Calu3 (cell line): ENCODE measurements at regions of chr1 and their contacts with region 1.

Region 1: DNA sequence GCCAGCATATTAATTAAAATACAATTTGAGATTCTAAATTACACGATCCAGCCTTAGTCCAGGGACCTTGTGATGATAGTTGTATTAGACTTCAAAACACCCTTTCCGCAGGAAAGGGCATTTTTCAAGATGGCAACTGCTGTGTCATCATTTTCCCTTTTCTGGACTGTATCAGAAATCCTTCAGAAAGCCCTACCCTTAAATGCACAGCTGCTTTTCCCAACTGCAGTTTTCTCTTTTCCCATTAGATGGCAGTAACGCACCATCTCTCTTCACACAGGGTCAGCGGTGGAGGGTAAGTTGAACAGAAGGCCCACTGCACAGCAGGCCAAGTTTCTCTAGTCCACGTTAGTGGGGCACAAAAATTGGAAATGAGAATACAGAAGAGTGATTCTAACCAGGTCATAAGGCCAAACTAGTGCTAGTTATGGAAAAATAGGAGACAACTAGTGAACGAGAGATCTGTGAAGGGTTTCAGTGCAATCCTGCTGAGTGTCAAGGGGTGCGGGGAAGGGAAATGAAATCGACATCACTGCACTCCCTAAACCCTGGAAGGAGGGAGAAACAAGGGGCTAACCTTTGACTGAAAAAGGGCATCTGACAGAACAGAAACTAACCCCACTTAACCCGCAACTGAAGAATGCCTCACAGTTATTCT is 22.1 kb upstream of the TDRD10 start:
- DNase-seq: peak; percentile 88
- H3K4me3 Mint-ChIP-seq: no peak overlapping the region
- H3K27ac Mint-ChIP-seq: no peak overlapping the region
- H3K4me1 Mint-ChIP-seq: peaks cover 30% of the 10 kb centered on the region
- H3K27me3 Mint-ChIP-seq: peaks cover 12% of the 10 kb centered on the region
- CTCF ChIP-seq: peak; percentile 82

Region 2: GRCh38 chr1:154352581-154353459 is 127.1 kb before region 1 on chr1:
- CTCF ChIA-PET with region 1: interaction called, 8 read pairs
- intact Hi-C with region 1: loop called (anchors 1 kb)
- DNase-seq: peak; percentile 49
- H3K4me3 Mint-ChIP-seq: peak overlapping the region; percentile 63
- H3K27ac Mint-ChIP-seq: peak overlapping the region; percentile 32
- H3K4me1 Mint-ChIP-seq: peaks cover 32% of the 10 kb centered on the region
- H3K27me3 Mint-ChIP-seq: peaks cover 26% of the 10 kb centered on the region
- CTCF ChIP-seq: peak; percentile 17

Region 3: GRCh38 chr1:154404984-154405761 is 74.7 kb before region 1 on chr1 and contains the start of gene IL6R:
- CTCF ChIA-PET with region 1: interaction called, 3 read pairs
- intact Hi-C with region 1: loop called (anchors 1 kb)
- DNase-seq: peak; percentile 92
- H3K4me3 Mint-ChIP-seq: peak within 1 kb of the TSS; percentile 84
- H3K27ac Mint-ChIP-seq: peak within 1 kb of the TSS; percentile 83
- H3K4me1 Mint-ChIP-seq: peaks cover 29% of the 10 kb centered on the region
- H3K27me3 Mint-ChIP-seq: no peaks in the 10 kb centered on the region
- CTCF ChIP-seq: no peak
- total RNA-seq, gene IL6R: 5.0 and 8.3 TPM in 2 replicates

Region 4: DNA sequence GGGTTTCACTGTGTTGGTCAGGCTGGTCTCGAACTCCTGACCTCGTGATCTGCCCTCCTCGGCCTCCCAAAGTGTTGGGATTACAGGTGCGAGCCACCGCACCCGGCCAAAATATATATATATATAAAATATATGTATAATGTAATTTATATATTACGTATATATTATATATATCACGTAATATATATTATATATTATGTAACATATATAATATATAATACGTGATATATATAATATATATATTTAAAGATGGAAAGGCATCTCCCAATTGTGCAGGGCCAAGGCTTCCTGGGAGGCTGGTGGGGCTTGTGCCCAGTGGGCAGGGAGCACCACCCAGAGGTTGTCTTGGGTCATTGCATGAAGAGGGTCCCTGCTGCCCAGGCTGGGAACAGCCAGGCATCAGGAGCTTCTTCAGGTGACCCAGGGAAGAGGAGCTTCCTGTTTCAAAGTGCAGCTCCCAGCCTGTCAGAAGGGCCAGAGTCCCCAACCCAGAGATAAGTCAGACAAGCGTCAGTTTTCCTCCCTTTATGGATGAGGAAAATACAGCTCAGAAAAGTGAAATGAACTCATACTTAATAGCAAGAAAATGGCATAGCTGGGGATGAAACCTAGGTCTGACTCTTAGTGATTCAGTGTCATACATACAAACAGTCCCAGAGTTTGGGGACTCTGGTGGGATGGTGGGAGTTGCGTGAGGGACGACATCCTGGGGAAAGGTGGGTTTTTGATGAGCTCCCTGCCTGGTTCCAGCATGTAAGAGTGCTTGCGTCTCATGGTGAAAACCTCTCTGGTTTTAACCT is 66.6 kb after region 1 on chr1:
- CTCF ChIA-PET with region 1: interaction called, 35 read pairs
- intact Hi-C with region 1: loop called (anchors 2 kb)
- DNase-seq: peak; percentile 82
- H3K4me3 Mint-ChIP-seq: no peak overlapping the region
- H3K27ac Mint-ChIP-seq: no peak overlapping the region
- H3K4me1 Mint-ChIP-seq: peaks cover 14% of the 10 kb centered on the region
- H3K27me3 Mint-ChIP-seq: peaks cover 44% of the 10 kb centered on the region
- CTCF ChIP-seq: peak; percentile 76

Region 5: DNA sequence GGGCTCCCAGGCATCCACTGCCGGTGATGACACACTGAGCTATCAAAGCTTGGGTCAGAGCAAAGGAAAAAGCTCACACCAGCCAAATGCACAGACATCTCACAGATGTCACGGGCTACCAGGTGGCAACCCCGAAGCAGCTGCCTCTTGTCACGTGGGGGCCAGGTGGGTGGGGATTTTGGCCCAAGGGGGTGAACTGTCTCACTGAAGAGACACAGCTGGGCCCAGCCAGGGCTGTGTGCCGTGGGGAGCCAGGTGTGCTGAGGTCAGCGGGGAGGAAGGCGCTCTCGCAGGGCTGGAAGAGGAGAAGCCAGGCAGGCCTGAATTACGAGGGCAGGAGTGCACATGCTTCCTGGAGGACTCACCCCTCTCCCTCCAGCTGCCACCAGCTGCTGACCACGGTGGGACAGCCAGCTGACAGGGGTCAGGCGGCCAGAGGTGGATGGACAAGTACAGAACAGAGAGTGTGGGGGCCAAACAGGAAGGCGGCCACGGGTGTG is 357.8 kb after region 1 on chr1:
- CTCF ChIA-PET with region 1: no interaction called
- intact Hi-C with region 1: no loop called
- DNase-seq: no peak
- H3K4me3 Mint-ChIP-seq: no peak overlapping the region
- H3K27ac Mint-ChIP-seq: no peak overlapping the region
- H3K4me1 Mint-ChIP-seq: no peaks in the 10 kb centered on the region
- H3K27me3 Mint-ChIP-seq: peaks cover 93% of the 10 kb centered on the region
- CTCF ChIP-seq: no peak